Activated CD8-positive, alpha-beta memory T cell treated with anti-CD3 and anti-CD28 coated beads, Interleukin-2, amount 10 ng/mL, durations not matched to agents 7 days and 5 days (primary cell): ENCODE measurements at regions of chr1 and their contacts with region 1.

Region 1: DNA sequence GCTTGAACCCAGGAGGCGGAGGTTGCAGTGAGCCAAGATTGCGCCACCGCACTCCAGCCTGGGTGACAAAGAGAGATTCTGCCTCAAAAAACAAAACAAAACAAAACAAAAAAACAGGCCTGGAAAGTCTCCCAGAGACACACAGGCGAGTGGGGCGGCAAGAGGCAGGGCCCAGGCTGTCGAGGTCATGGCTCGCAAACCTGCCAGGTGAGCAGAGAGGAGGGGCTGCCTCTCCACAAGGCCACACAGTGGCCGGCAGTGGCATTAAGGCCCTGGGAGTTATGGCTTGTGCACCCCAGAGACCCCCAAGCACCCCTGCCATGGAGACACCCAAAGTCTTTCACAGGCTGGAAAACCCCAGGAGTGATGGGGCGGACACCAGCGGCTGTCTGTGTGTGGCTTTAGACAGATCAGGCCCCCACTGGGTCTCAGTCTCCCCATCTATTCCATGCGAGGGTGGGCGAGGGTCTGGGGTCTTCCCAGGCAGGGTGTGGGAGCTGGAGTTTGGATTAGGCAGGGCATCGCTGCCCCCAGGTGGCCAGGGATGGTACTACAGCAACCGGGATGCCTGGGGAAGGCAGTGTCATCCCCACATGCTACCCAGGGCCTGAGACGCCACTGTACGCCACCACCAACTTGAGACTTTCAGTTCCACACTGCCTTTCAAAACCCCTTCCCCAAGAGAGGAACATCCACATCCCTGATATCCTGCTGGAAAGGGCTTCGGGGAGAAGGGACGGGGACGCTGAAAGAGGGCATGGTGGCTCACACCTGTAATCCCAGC is 7.3 kb upstream of the CTRC start:
- DNase-seq: peak; percentile 74
- ATAC-seq: peak; percentile 71
- H3K4me3 Mint-ChIP-seq: no peak overlapping the region
- H3K27ac Mint-ChIP-seq: no peak overlapping the region
- H3K4me1 Mint-ChIP-seq: peaks cover 8% of the 10 kb centered on the region
- H3K27me3 Mint-ChIP-seq: no peaks in the 10 kb centered on the region

Region 2: DNA sequence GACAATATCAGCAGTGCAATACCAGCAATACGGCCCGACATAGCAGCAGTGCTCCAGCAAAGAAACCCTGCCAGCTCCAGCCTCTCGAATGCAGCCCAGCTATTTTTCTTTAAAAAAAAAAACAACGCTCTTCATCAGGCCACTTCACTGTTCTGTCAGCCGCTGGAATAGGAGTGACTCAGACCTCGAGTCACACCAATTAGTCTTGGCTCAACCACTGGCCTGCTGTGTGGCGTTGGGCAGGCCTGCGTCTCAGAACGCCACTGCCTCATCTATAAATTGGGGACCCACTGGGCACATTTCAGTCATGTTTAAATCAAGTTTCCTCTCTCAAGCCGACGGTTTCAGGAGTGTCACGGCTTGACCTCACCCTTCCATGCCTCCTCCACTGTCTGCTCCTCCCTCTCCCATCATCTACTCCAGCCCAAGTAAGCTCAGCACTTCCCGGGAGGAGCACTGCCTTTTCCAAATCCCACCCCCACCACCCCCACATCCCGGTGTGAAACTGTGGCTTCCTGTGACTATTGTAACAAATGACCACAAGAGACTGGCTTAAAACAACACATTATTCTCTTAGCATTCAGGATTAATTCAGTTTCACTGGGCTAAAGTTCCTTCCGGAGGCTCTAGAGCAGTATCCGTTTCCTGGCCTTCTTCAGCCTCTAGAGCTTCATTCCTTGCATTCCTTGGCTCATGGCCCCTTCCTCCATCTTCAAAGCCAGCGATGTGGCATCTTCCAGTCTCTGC is 93.2 kb before region 1 on chr1:
- CTCF ChIA-PET with region 1: interaction called, 15 read pairs
- DNase-seq: no peak
- ATAC-seq: no peak
- H3K4me3 Mint-ChIP-seq: no peak overlapping the region
- H3K27ac Mint-ChIP-seq: no peak overlapping the region
- H3K4me1 Mint-ChIP-seq: peaks cover 29% of the 10 kb centered on the region
- H3K27me3 Mint-ChIP-seq: peaks cover 17% of the 10 kb centered on the region

Region 3: GRCh38 chr1:15384301-15384901 is 46.6 kb before region 1 on chr1:
- CTCF ChIA-PET with region 1: interaction called, 12 read pairs
- DNase-seq: no peak
- ATAC-seq: no peak
- H3K4me3 Mint-ChIP-seq: peak overlapping the region; percentile 39
- H3K27ac Mint-ChIP-seq: no peak overlapping the region
- H3K4me1 Mint-ChIP-seq: peaks cover 14% of the 10 kb centered on the region
- H3K27me3 Mint-ChIP-seq: peaks cover 47% of the 10 kb centered on the region